Activated CD4-positive, alpha-beta memory T cell treated with anti-CD3 and anti-CD28 coated beads for 36 hours (primary cell): ENCODE measurements at regions of chr3 and their contacts with region 1.

Region 1: DNA sequence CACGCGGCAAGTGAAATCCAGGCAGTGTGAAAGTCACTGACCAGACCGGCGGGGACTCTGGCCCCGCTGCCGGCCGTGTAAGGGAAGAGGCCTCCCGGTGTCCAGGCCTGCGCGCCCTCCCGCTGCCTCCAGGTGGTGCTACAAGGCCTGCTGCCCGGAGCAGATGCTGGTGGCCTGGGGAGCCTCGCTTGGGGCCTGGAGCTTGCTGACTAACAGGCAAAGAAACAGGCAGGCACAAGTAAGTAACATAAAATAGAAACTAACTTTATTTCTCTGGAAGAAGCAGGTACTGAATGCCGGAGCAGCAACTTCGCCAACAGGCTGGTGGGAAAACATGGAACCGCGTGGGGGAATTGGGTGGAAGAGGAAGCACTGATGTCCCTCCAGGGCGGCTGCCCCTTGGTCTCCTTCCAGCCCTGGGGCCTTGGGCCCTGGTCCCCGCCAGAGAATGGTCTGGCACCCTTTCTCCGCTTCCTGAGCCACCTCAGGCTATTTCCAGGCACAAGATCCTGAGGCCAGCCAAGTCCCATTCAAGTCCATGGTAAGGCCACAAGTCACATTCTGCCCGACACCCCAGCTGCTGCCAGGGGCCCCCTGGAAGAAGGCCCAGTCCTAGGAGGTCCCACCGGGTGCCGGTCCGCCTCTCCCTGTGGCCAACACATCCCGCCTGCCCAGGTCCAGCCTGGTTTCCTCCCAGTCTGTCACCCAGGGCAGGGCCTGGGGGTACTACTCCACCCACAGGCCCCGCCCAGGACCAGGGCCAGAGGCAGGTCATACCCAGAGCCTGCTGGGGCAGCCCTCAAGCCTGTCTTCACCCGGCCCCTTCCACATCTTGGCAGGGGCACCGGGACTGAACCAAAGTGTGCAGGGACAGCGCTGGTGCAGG is 45.0 kb downstream of the TNK2 start:
- DNase-seq: peak; percentile 82
- H3K4me3 Mint-ChIP-seq: no peak overlapping the region
- H3K27ac Mint-ChIP-seq: no peak overlapping the region
- H3K4me1 Mint-ChIP-seq: peaks cover 6% of the 10 kb centered on the region
- H3K27me3 Mint-ChIP-seq: no peaks in the 10 kb centered on the region

Region 2: DNA sequence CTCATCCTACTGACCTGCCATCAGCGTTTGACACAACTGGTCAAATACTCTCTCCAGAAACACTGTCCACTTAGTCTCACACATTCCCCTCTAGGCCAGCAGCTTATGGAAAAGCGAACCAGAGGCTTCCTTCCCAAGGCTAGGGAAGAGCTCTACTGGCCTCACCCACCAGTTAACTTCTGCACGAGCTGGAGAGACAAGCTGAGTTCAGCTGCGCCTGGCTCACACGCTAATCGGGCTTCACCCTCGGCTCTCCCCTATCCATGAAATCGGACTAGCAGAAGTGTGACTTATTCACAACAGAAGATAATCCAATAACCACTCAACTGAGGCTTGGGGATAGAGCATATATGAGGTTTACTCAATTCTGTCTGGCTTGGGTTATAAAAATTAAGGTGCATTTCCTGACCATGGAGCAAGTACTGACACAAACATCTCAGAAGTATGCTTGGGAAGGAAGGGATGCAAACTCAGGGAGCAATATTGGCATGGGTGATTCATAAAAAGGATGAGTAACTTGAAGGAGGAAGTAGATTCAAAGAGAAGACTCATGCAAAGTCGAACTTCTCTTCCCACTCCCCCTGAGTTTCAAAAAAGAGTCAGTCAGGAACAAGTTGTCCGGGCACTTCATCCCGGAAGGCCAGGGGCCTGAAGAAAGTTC is 665.5 kb before region 1 on chr3:
- CTCF ChIA-PET with region 1: no interaction called
- POLR2A ChIA-PET with region 1: no interaction called
- intact Hi-C with region 1: no loop called
- DNase-seq: no peak
- H3K4me3 Mint-ChIP-seq: no peak overlapping the region
- H3K27ac Mint-ChIP-seq: no peak overlapping the region
- H3K4me1 Mint-ChIP-seq: peaks cover 27% of the 10 kb centered on the region
- H3K27me3 Mint-ChIP-seq: no peaks in the 10 kb centered on the region

Region 3: GRCh38 chr3:195886181-195887141 is 23.1 kb after region 1 on chr3:
- CTCF ChIA-PET with region 1: interaction called, 11 read pairs
- POLR2A ChIA-PET with region 1: no interaction called
- intact Hi-C with region 1: no loop called
- DNase-seq: no peak
- H3K4me3 Mint-ChIP-seq: no peak overlapping the region
- H3K27ac Mint-ChIP-seq: no peak overlapping the region
- H3K4me1 Mint-ChIP-seq: peaks cover under 1% of the 10 kb centered on the region
- H3K27me3 Mint-ChIP-seq: no peaks in the 10 kb centered on the region

Region 4: GRCh38 chr3:195894780-195895607 is 31.6 kb after region 1 on chr3:
- CTCF ChIA-PET with region 1: interaction called, 81 read pairs
- POLR2A ChIA-PET with region 1: no interaction called
- intact Hi-C with region 1: loop called (anchors 1 kb)
- DNase-seq: peak; percentile 84
- H3K4me3 Mint-ChIP-seq: peak overlapping the region; percentile 84
- H3K27ac Mint-ChIP-seq: peak overlapping the region; percentile 89
- H3K4me1 Mint-ChIP-seq: peaks cover 39% of the 10 kb centered on the region
- H3K27me3 Mint-ChIP-seq: no peaks in the 10 kb centered on the region

Region 5: DNA sequence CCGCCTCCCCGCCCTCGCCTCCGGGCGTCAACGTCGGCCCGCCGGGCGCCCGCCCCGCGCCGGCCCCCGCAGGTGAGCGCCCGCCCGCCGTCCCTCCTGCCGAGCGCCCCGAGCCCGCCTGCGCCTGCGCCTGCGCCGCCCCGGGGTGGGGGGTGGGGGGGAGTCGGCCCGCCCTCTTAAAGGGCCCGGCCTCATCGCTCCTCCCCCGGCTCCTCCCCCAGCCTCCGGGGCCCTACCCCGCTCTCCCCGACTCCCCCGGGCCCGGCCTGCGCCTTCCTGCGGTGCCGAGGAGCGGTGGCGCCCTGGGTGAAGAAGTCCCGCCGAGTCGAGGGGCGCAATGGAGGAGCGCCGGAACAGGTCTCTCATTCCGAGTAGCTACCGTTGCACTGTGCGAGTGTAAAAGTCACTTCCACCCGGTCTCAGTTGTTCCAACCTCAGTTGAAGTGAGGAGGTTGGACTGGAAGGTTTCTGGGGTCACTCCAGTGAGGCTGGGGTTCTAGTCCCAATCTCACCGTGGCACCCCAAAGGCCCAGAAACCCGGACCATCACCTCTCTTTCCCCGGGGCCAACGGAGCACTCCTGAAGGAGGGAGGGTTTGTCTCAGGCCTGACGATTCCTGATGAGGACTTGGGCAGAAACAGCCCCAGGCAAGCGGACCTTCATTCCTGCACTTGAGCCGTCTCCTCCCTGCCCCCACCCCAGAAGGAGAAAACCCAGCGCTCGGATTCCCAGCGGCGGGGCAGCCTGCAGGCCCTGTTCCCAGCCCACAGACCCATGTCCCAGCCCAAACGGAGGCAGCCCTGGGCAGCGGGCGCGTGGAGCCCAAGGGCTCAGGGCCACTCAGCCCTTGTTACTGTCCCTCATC is 46.5 kb after region 1 on chr3:
- CTCF ChIA-PET with region 1: interaction called, 99 read pairs
- POLR2A ChIA-PET with region 1: no interaction called
- intact Hi-C with region 1: loop called (anchors 1 kb)
- DNase-seq: peak; percentile 91
- H3K4me3 Mint-ChIP-seq: peak overlapping the region; percentile 66
- H3K27ac Mint-ChIP-seq: peak overlapping the region; percentile 54
- H3K4me1 Mint-ChIP-seq: peaks cover 28% of the 10 kb centered on the region
- H3K27me3 Mint-ChIP-seq: no peaks in the 10 kb centered on the region